ENCODE measurements at regions of chr6 and their contacts with region 1.

Region 1: GRCh38 chr6:10429638-10430427 is 15.0 kb upstream of the TFAP2A start:
- DNase-seq: no peak

Region 2: DNA sequence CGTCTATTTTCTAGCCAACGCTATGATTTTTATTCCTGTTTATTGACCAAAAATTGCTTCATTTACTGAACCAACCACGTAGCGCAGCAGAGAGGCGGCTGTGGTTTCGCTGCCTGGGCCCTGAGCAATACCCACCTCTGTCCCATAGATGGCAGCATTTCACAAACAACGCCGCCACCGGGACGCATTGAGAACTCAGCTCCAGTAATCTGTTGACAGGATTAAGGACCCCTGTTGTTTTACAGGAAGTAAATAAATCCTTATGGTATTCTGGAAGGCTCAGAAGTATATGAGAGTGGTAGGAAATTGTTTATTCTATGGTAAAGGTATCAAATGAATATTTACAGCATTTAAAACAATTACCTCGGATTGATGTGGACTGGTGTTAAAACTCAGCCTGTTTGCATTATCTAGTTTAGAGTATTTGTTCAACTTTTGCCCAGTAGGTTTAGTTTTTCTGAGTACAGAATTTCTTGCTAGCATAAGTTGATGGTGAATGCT is 1446.6 kb before region 1 on chr6:
- intact Hi-C with region 1: loop called in 1 of 2 experiments (anchors 5 kb)
- DNase-seq: peak; percentile 87

Region 3: DNA sequence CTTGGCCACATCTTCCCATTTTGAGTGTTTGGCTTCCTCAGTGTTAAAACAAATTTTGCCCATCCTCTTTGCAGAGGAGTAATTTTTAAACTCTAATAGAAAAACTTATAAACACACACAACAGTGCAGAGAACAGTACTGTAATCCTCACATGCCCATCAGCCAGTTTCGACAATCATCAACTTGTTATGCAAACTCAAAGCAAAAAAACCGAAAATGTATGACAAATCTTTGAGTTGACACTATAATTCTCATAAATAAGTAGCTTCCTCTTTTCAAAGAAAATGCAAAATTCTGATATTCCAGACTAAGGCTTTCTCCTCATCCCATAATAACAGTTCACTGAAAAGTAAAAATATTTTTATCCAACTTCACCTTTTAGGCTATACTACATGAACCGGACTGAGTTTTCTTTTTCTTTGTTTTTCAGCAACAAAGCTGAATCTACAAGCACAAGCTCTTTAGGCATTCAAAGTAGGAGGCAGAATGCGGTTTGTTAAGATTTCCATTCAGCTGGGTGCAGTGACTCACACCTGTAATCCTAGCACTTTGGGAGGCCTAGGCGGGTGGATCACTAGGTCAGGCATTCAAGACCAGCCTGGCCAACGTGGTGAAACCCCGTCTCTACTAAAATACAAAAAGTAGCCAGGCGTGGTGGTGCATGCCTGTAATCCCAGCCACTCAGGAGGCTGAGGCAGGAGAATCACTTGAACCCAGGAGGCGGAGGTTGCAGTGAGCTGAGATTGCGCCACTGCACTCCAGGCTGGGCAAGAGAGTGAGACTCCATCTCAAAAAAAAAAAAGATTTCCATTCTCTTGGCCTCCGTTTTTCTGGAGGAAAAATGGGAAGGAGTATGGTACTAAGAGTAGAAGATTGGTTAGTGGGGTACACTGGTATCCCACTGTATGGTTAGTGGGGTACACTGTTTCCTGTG is 166.2 kb after region 1 on chr6:
- intact Hi-C with region 1: no loop called
- DNase-seq: no peak